ENCODE measurements at regions of chr3 and their contacts with region 1.

Region 1: GRCh38 chr3:100068826-100069225 is 45.5 kb downstream of the FILIP1L start:
- DNase-seq: peak; percentile 79
- ATAC-seq: peak; percentile 95
- H3K4me3 ChIP-seq: no peak overlapping the region
- H3K27ac ChIP-seq: no peak overlapping the region
- H3K4me1 ChIP-seq: peaks cover 94% of the 10 kb centered on the region
- H3K27me3 ChIP-seq: no peaks in the 10 kb centered on the region
- CTCF ChIP-seq: peak; percentile 92
- EP300 ChIP-seq: no peak
- POLR2A ChIP-seq: no peak
- RAD21 ChIP-seq: peak; percentile 91

Region 2: DNA sequence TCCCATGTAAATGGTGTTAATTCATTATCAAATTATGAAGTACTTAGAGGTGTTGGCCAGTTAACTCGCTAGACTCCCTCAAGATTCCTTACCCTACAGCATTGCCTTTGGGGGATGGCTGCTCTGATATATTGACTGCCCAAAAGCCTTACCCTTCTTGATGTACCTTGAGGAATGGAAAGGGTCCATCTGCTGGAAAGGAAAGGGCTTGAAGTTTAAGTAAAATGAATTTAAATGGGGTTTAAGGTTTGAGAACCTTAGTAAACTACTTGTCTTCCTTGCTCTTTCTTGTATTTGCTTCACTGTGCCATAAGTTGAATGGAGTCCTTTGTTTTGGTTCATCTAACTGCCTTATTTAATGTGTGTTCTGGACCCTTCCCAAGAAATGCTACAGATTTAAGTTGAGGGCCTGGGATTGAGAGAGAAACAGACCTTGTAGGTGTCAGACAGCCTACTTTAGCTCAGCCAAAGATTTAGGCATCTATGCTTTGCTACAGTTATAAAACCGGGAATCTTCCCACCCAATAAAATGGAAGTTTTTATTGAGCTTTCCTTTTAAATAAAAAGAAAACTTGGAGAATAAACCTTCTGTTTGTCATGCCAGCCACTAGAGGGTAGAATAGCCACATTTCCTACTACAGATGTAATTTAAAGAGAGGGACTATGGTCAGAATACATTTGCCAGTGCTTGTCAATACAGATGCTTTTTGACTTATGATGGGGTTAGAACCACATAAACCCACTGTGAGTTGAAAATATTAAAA is 225.8 kb before region 1 on chr3:
- CTCF ChIA-PET with region 1: no interaction called
- POLR2A ChIA-PET with region 1: interaction called, 3 read pairs
- in situ Hi-C with region 1: no loop called
- intact Hi-C with region 1: loop called (anchors 2 kb)
- DNase-seq: peak; percentile 38
- ATAC-seq: peak; percentile 80
- H3K4me3 ChIP-seq: no peak overlapping the region
- H3K27ac ChIP-seq: no peak overlapping the region
- H3K4me1 ChIP-seq: peaks cover 37% of the 10 kb centered on the region
- H3K27me3 ChIP-seq: no peaks in the 10 kb centered on the region
- CTCF ChIP-seq: peak; percentile 70
- EP300 ChIP-seq: no peak
- POLR2A ChIP-seq: no peak
- RAD21 ChIP-seq: peak; percentile 55; the same call in 1 of the 2 replicates

Region 3: DNA sequence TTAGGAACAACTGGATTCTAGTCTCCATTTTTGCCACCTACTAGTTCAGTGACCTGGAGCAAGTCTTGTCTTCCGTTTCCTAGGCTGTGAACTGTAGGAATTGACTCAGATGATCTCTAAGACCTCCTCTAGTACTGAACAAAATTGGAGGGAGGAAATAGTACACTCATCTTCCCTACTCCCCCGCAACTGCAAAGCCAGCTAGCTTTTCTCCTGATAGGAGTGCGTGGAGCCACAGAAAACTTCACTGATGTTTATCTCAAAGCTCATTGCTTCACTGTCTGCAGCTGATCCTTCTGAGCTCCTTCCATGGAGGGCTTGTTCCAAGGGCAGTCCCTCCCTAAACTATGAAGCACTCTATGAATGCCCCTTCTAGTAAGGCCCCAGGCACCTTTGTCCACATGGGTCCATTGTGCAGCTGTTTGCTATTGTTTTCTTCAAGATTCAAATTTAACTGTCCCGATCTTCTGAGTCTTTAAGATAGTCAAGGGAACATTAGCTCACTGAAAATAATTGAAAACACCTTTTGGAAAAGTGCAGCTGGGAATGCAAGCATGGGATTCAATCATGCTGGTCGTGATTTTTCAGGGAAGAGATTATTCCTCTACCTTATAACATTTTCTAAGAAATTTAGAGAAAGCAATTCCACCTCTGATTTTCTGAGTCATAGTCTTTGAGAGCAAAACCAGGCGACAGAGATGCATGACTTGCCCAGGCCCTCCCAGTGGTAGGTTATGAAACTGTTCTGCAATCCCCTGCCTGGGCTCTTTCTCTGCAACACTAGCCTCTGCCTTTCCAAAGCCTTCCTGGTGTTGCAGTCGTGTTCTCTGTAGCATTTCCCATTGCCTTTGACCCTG is 21.2 kb after region 1 on chr3:
- CTCF ChIA-PET with region 1: interaction called, 11 read pairs
- POLR2A ChIA-PET with region 1: interaction called, 6 read pairs
- in situ Hi-C with region 1: no loop called
- intact Hi-C with region 1: no loop called
- DNase-seq: peak; percentile 67
- ATAC-seq: peak; percentile 99
- H3K4me3 ChIP-seq: no peak overlapping the region
- H3K27ac ChIP-seq: peak overlapping the region; percentile 60
- H3K4me1 ChIP-seq: peaks cover 46% of the 10 kb centered on the region
- H3K27me3 ChIP-seq: no peaks in the 10 kb centered on the region
- CTCF ChIP-seq: peak; percentile 61
- EP300 ChIP-seq: no peak
- POLR2A ChIP-seq: no peak
- RAD21 ChIP-seq: peak; percentile 61

Region 4: DNA sequence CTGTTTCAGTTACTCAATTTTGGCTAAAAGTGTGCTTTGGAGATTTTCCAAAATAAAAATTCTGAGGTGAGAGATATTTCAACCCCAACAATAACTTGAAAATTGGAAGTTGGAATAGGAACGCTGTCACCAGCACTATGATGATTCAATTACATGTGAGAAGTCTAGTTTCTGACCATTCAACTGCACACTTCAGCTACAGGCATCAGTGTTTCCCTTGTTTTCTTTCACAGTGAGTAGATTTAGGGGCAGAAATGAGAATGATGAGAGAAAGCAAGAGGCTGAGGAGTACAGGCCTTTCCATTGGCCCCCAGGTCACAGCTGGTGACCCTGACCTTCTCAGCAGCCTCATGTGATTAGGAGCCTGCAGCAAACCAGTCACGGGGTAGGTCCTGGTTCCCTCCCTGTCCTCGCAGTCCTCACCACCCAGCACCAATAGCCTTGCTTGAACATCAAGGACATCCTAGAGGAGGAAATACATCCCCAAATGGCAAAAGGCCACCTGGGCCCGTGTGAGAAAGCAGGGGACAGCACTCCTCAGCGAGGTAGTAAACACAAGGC is 55.5 kb after region 1 on chr3:
- CTCF ChIA-PET with region 1: no interaction called
- POLR2A ChIA-PET with region 1: no interaction called
- in situ Hi-C with region 1: no loop called
- intact Hi-C with region 1: no loop called
- DNase-seq: no peak
- ATAC-seq: no peak
- H3K4me3 ChIP-seq: no peak overlapping the region
- H3K27ac ChIP-seq: no peak overlapping the region
- H3K4me1 ChIP-seq: no peaks in the 10 kb centered on the region
- H3K27me3 ChIP-seq: no peaks in the 10 kb centered on the region
- CTCF ChIP-seq: no peak
- EP300 ChIP-seq: no peak
- POLR2A ChIP-seq: no peak
- RAD21 ChIP-seq: no peak

Measured in HepG2 (cell line).